ENCODE measurements at regions of chr9 and their contacts with region 1.

Region 1: GRCh38 chr9:96299823-96300222 is 2.2 kb downstream of the HSD17B3 start:
- DNase-seq: peak; percentile 12 to 81
- H3K4me3 ChIP-seq: no peak overlapping the region
- H3K27ac ChIP-seq: no peak overlapping the region
- H3K4me1 ChIP-seq: peaks cover 13% of the 10 kb centered on the region; the same call in 1 of the 2 replicates
- H3K27me3 ChIP-seq: no peaks in the 10 kb centered on the region
- CTCF ChIP-seq: no peak

Region 2: DNA sequence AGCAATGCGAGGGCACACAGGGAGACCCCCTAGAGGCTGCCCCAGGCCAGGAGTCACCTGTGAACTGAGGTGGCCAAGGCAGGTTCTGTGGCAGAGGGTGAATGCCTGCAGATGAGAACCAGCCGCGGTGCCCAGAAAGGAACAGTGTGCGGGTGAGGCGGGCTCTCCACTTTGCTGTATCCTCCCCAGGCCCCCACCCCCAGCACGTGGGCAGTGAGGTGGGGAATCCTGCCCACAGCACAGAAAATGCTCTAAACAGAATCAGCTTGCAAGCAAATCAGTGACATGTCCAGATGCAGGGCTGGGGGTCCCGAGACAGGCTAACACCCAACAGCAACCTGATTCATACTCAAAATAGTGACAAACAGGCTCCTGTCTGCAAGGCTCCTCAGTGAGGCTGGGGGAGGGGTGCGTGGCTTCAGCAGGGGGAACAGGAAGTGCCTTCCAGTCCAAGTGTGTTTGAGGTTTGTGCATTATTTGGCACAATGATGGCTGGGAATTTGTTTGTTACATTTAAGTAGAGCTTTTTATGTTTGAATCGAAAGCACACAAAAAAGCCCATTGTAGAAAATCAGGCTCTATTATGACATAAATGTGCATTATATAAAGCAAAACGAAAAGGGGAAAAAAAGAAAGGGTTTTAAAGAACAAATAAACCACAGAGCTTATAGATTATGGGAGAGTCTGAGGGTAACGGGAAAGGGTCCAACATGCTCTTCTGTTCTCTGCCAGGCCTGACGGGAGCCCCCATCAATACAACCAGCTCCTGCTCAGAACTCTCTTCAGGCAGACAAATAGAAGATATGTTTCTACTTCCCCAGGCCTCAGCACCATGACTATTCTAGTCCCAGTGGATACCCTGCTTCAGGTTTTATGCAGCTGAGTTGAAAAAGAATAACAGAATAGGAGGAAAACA is 199.2 kb before region 1 on chr9:
- CTCF ChIA-PET with region 1: no interaction called
- POLR2A ChIA-PET with region 1: no interaction called
- intact Hi-C with region 1: no loop called
- DNase-seq: no peak
- H3K4me3 ChIP-seq: no peak overlapping the region
- H3K27ac ChIP-seq: no peak overlapping the region
- H3K4me1 ChIP-seq: no peaks in the 10 kb centered on the region
- H3K27me3 ChIP-seq: peaks cover 79% of the 10 kb centered on the region
- CTCF ChIP-seq: no peak

Region 3: GRCh38 chr9:96270236-96270744 is 29.5 kb before region 1 on chr9:
- CTCF ChIA-PET with region 1: no interaction called
- POLR2A ChIA-PET with region 1: no interaction called
- intact Hi-C with region 1: no loop called
- DNase-seq: no peak
- H3K4me3 ChIP-seq: no peak overlapping the region
- H3K27ac ChIP-seq: no peak overlapping the region
- H3K4me1 ChIP-seq: no peaks in the 10 kb centered on the region
- H3K27me3 ChIP-seq: no peaks in the 10 kb centered on the region
- CTCF ChIP-seq: no peak

Region 4: GRCh38 chr9:96391021-96391765 is 91.4 kb after region 1 on chr9:
- CTCF ChIA-PET with region 1: no interaction called
- POLR2A ChIA-PET with region 1: interaction called, 15 read pairs
- intact Hi-C with region 1: no loop called
- DNase-seq: no peak
- H3K4me3 ChIP-seq: no peak overlapping the region
- H3K27ac ChIP-seq: no peak overlapping the region
- H3K4me1 ChIP-seq: no peaks in the 10 kb centered on the region
- H3K27me3 ChIP-seq: no peaks in the 10 kb centered on the region
- CTCF ChIP-seq: no peak

Measured in PC-9 (cell line).